A673 (cell line): ENCODE measurements at regions of chr2 and their contacts with region 1.

Region 1: GRCh38 chr2:42614838-42615237 is 46.4 kb downstream of the MTA3 start:
- DNase-seq: no peak
- H3K4me3 ChIP-seq: no peak overlapping the region
- H3K27ac ChIP-seq: no peak overlapping the region
- H3K4me1 ChIP-seq: peaks cover 14% of the 10 kb centered on the region
- H3K27me3 ChIP-seq: no peaks in the 10 kb centered on the region
- CTCF ChIP-seq: no peak

Region 2: DNA sequence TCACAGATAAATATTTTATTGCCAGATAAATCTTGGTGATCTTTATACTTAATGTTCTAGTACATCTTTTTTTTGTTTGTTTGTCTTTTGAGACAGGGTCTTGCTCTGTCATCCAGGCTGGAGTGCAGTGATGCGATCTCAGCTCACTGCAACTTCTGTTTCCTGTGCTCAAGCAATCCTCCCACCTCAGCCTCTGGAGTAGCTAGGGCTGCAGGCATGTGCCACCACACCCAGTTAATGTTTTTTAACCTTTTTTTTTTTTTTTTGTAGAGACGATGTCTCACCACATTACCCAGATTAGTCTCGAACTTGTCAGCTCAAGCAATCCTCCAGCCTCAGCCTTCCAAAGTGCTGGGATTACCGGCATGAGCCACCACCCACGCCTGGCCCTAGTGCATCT is 1070.5 kb after region 1 on chr2:
- CTCF ChIA-PET with region 1: no interaction called
- POLR2A ChIA-PET with region 1: interaction called, 15 read pairs
- intact Hi-C with region 1: no loop called
- DNase-seq: no peak
- H3K4me3 ChIP-seq: no peak overlapping the region
- H3K27ac ChIP-seq: no peak overlapping the region
- H3K4me1 ChIP-seq: no peaks in the 10 kb centered on the region
- H3K27me3 ChIP-seq: no peaks in the 10 kb centered on the region
- CTCF ChIP-seq: no peak